Right ventricle myocardium inferior (tissue), 1 donor: ENCODE measurements at regions of chr6 and their contacts with region 1.

Region 1: DNA sequence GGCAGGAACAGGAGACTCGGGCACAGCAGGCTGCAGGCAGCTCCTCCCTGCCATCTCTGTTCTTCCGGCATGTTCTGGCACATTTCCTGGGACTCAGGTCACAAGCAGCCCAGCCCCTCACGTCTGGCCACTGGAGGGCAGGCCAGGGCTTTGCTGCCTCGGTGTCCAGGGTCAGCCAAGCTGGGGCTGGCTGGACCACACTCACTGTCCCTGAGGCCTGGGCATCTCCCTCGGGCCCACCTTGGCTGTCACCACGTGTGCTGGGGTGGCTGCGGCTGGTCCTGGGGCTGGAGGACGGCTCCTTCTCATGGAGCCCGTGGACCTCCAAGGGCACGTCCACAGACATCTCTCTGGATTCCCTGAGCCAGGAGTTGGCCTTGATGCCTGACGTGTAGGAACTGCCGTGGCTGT is 18.5 kb downstream of the FRMD1 start:
- DNase-seq: peak; percentile 73
- ATAC-seq: peak; percentile 75

Region 2: DNA sequence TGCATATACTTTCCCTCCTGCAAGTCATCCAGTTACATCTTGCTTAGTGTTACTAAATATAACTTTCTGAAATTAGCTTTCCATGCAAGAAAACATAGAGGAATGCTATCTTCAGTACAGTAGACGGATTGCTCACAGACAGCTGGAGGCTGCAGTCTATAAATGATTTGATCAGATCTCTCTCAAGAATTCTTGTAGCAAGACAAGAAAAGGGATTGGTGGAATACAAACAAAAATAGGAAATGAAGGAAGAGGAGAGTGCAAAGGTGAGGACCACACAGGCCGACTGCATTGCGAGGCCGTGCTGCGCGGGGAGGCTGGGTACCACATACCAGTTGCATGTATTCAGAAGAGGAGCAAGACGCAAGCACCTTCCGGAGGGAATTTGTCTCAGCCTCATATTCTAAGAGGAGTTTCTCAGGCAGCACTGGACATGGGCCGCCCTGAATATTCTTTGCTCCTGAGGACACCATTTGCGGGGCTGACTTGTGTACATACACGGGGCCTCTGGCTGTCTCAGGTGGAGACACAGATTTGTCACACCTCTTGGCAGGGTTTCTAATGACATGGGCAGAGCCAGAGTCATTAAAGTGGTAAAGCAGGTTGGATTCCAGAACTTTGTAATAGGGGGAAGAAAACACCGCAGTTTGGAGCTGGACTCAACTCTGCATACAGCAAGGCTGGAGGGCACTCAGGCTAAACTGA is 85.7 kb before region 1 on chr6:
- intact Hi-C with region 1: no loop called
- DNase-seq: no peak
- ATAC-seq: no peak

Region 3: GRCh38 chr6:168071336-168072019 is 11.0 kb after region 1 on chr6:
- intact Hi-C with region 1: no loop called
- DNase-seq: no peak
- ATAC-seq: peak; percentile 19

Region 4: GRCh38 chr6:168088161-168089053 is 27.9 kb after region 1 on chr6:
- intact Hi-C with region 1: no loop called
- DNase-seq: peak; percentile 63
- ATAC-seq: peak; percentile 56

Region 5: DNA sequence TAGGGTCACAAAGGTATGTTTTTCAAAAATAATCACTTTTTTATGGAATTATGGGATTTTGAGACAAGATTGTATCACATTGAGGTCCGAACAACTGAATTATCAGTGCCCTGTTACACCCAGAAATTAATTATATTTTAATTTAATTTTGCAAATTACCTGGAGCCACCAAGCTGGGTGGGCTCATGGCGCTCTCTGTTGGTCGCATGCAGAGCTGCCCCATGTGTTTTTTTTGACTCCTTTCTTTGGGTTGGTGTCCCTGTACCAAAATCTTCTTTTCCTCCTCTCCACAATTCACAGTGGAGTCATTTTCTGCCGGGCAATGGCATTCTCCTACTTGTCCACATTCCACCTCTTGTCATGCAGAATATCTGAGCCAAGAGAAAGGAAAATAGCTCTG is 57.4 kb after region 1 on chr6:
- intact Hi-C with region 1: loop called (anchors 1 kb)
- DNase-seq: no peak
- ATAC-seq: no peak

Region 6: GRCh38 chr6:168132531-168133167 is 72.1 kb after region 1 on chr6:
- intact Hi-C with region 1: loop called (anchors 1 kb)
- DNase-seq: peak; percentile 78
- ATAC-seq: peak; percentile 85